PC-3 (cell line): ENCODE measurements at regions of chr15 and their contacts with region 1.

Region 1: DNA sequence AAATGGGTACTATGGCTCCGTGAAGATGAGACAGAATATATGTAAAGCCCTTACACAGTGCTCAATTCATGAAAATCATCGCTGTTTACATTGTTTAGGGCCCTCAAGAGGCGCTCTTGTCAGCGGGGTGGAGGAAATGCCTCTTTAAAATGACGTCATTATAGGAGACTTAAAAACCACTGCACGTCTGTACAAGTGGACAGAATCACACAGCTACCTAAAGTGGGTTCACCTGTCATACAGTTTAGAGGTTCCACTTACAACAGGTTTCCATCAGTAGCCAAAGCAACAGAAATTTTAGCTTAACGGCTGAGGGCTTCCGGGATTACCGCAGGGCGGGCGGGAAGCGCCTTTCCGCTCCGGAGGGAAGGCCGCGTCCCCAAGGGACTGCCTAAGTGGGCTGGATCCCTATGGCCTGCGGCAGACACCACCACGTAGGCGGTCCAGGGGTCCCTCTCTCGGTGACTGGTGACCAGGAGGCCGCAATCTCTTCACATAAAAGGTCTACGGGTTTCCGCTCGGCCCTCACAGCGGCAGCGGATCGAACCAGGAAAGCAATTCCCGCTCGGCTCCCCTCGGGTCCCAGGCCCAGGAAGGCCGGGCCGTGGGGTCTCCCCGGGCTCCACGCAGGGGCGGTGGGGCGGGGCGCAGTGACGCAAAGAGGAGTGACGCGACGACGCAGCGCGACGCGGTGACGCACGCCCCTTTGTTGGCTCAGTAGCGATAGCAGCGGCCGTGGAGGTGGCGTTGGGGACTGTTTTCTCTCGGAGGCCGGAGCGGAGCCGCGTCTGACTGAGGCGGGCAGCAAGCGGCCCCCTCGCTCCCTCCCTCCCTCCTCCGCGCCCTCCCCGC is at the start of gene ARIH1:
- DNase-seq: peak; percentile 93
- ATAC-seq: peak; percentile 82
- H3K4me3 ChIP-seq: peak within 1 kb of the TSS; percentile 98
- H3K27ac ChIP-seq: peak within 1 kb of the TSS; percentile 93
- H3K4me1 ChIP-seq: peaks cover 18% of the 10 kb centered on the region
- H3K27me3 ChIP-seq: no peaks in the 10 kb centered on the region
- CTCF ChIP-seq: peak; percentile 56
- total RNA-seq, gene ARIH1: 63.0 and 75.0 TPM in 2 replicates

Region 2: GRCh38 chr15:72229076-72229945 is 244.5 kb before region 1 on chr15:
- CTCF ChIA-PET with region 1: no interaction called
- POLR2A ChIA-PET with region 1: no interaction called
- intact Hi-C with region 1: loop called (anchors 10 kb)
- DNase-seq: no peak
- ATAC-seq: no peak
- H3K4me3 ChIP-seq: peak overlapping the region; percentile 93
- H3K27ac ChIP-seq: peak overlapping the region; percentile 86
- H3K4me1 ChIP-seq: peaks cover 28% of the 10 kb centered on the region
- H3K27me3 ChIP-seq: no peaks in the 10 kb centered on the region
- CTCF ChIP-seq: no peak

Region 3: GRCh38 chr15:72339777-72340177 is 134.1 kb before region 1 on chr15:
- CTCF ChIA-PET with region 1: no interaction called
- POLR2A ChIA-PET with region 1: no interaction called
- intact Hi-C with region 1: loop called (anchors 1 kb)
- DNase-seq: peak; percentile 73
- ATAC-seq: peak; percentile 94
- H3K4me3 ChIP-seq: no peak overlapping the region; the same call in 1 of the 2 replicates
- H3K27ac ChIP-seq: peak overlapping the region; percentile 56
- H3K4me1 ChIP-seq: peaks cover 19% of the 10 kb centered on the region
- H3K27me3 ChIP-seq: no peaks in the 10 kb centered on the region
- CTCF ChIP-seq: no peak

Region 4: GRCh38 chr15:72420576-72420975 is 53.3 kb before region 1 on chr15:
- CTCF ChIA-PET with region 1: no interaction called
- POLR2A ChIA-PET with region 1: no interaction called
- intact Hi-C with region 1: no loop called
- DNase-seq: no peak
- ATAC-seq: no peak
- H3K4me3 ChIP-seq: no peak overlapping the region
- H3K27ac ChIP-seq: no peak overlapping the region
- H3K4me1 ChIP-seq: no peaks in the 10 kb centered on the region
- H3K27me3 ChIP-seq: no peaks in the 10 kb centered on the region
- CTCF ChIP-seq: no peak

Region 5: DNA sequence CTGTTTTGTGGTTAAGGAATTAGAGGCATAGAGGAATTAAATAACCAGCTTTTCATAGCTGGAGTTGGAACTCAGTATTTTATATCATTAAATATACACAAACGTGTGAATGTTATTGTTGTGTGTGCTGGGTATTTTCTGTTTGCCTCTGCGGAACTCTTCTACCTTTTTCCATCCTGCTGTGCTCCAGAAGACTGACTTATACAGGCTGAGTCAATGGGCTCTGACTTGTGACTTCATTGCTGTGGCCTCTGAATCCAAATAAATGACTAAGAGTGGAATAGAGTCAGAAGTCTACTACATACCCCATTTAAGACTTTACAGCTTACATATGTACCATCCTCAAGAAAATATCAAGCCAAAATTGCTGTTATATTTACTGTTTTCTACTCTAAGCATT is 17.9 kb after region 1 on chr15:
- CTCF ChIA-PET with region 1: no interaction called
- POLR2A ChIA-PET with region 1: no interaction called
- intact Hi-C with region 1: no loop called
- DNase-seq: peak; percentile 72
- ATAC-seq: peak; percentile 97
- H3K4me3 ChIP-seq: no peak overlapping the region
- H3K27ac ChIP-seq: 0 out of 2 replicates have a peak overlapping the region, but pooled peaks have one; percentile 5
- H3K4me1 ChIP-seq: peaks cover 29% of the 10 kb centered on the region
- H3K27me3 ChIP-seq: no peaks in the 10 kb centered on the region
- CTCF ChIP-seq: no peak

Region 6: GRCh38 chr15:72585476-72586082 is 111.7 kb after region 1 on chr15:
- CTCF ChIA-PET with region 1: no interaction called
- POLR2A ChIA-PET with region 1: no interaction called
- intact Hi-C with region 1: loop called (anchors 1 kb)
- DNase-seq: peak; percentile 13
- ATAC-seq: no peak
- H3K4me3 ChIP-seq: no peak overlapping the region
- H3K27ac ChIP-seq: no peak overlapping the region
- H3K4me1 ChIP-seq: no peaks in the 10 kb centered on the region
- H3K27me3 ChIP-seq: no peaks in the 10 kb centered on the region
- CTCF ChIP-seq: peak; percentile 52

Region 7: DNA sequence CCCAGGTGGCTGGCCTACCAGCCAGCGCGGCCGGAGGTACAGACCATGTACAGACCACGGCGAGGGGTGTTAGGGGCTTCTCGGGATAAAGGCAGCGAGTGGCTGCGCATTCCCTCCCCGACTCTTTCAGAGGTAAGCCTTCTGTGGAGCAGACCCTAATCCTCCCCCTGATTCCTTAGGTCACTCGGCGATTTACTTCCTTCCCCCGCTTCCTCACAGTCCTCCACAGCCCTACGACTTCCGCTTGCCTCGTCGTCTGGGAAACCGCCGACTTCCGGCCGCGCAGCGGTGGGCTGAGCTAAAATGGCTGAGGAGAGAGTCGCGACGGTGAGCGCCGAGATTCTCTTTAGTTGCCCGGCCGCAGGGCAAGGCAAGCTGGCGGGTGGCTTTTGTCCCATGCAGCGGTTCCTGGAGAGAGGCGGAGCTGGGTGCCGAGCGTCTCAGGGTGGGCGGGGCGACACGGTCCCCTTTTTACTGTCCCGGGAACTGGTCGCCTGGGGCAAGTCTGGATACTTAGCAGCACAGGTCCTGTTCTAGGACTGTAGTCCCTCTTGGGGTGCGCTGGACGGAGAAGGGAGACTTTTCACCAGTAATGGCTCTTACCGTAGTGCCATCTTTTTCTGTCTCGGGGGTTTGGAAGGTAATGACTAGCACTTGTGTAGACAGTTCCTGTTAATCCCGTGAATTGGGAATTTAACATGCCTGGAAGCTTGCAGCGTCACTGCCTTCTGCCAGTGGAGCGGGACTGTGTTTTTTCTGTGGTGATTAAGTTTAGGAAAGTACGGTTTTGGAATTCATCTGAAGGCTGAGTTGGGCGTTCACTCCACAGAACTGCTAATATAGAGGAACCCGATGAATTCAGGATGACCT is 212.3 kb after region 1 on chr15 and contains the starts of genes BBS4 and HIGD2B:
- CTCF ChIA-PET with region 1: no interaction called
- POLR2A ChIA-PET with region 1: no interaction called
- intact Hi-C with region 1: loop called (anchors 2 kb)
- DNase-seq: peak; percentile 89
- ATAC-seq: peak; percentile 95
- H3K4me3 ChIP-seq: peak within 1 kb of the TSS; percentile 93
- H3K27ac ChIP-seq: peak within 1 kb of the TSS; percentile 64
- H3K4me1 ChIP-seq: peaks cover 7% of the 10 kb centered on the region
- H3K27me3 ChIP-seq: no peaks in the 10 kb centered on the region
- CTCF ChIP-seq: no peak
- total RNA-seq, gene BBS4: 7.5 and 18.7 TPM in 2 replicates
- total RNA-seq, gene HIGD2B: 0.11 TPM in 1 of 2 replicates, not detected in the other